ENCODE measurements at regions of chr15 and their contacts with region 1.

Region 1: DNA sequence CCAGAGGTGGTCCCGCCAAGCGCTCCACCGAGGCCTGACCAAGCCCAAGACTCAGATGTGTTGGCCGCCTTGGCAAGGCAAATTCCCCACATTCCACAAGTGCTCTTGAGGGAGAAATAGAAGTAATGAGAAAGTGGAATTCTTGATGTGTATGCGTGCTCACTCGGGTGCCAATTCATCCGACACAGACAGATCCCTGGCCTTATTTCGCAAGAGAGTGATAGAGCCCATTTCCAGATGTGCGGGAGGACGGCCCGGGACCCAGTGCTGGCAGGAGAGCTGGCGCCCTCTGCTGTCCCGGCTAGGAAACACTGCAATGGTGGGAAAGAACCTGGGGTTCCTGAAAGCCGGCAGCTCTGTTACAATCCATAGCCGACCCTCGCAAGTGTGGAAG is 76.0 kb downstream of the HMG20A start:
- DNase-seq: peak; percentile 95
- H3K4me3 ChIP-seq: peak overlapping the region; percentile 39
- H3K27ac ChIP-seq: peak overlapping the region; percentile 91
- H3K27me3 ChIP-seq: no peaks in the 10 kb centered on the region
- CTCF ChIP-seq: peak; percentile 98

Region 2: DNA sequence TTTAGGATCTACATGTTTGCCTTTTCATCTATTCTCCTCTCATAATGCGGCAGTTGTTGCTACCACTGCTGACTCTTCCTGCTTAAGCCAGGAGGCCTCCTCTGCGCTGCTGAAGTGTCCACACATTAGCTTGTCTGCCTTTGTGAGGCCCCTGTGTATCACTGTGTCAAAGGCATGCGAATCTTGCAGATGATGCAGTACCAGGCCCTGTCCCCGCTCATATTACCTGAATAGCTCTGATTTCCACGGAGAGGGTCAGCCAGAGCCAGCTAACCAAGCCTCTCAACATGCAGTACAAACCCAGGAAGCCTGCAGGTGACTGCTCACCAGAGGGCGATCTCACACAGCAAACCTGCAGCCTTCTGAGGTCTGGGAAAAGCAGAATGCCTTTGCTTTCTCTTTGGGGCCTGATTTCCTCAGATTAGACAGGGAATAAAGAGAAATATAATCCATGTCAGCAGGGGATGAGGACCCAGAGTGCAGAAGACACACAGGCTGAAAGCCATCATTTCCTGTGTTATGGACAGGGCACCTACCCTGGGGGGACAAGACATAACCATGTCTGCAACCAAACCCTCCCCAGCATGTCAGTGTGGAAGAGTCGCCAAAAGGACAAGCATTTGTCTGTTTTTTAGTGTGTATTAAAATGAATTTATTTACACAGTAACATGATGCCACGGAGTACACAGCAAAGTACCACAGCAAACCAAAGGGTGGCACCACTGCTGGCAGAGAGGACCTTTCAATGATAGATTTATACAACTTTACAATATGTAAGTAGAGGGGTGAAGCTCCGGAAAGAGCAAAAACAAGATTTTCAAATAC is 389.0 kb before region 1 on chr15:
- CTCF ChIA-PET with region 1: interaction called, 12 read pairs
- POLR2A ChIA-PET with region 1: no interaction called
- DNase-seq: peak; percentile 27
- H3K4me3 ChIP-seq: no peak overlapping the region
- H3K27ac ChIP-seq: no peak overlapping the region
- H3K27me3 ChIP-seq: no peaks in the 10 kb centered on the region
- CTCF ChIP-seq: peak; percentile 79

Region 3: GRCh38 chr15:77118882-77119321 is 377.8 kb before region 1 on chr15:
- CTCF ChIA-PET with region 1: interaction called, 33 read pairs
- POLR2A ChIA-PET with region 1: interaction called, 3 read pairs
- DNase-seq: peak; percentile 54
- H3K4me3 ChIP-seq: no peak overlapping the region
- H3K27ac ChIP-seq: no peak overlapping the region
- H3K27me3 ChIP-seq: no peaks in the 10 kb centered on the region
- CTCF ChIP-seq: peak; percentile 82

Region 4: DNA sequence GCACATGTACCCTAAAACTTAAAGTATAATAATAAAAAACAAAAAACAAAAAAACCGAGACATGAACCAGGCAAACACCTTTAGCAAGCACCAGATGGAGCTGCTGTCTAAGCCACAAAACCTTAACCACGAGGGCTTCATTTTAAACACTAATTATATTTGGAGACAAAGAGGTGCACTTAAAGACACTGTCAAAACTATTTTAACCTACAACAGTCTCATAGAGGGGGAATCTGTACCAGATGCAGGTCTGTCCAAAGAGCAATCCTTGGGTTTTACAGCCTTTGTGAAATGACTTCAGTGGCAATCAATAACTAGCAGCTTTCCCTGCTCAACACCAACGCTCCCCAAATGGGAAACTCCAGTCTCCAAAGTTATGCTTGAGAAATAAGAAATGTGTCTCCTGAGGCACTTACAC is 310.1 kb before region 1 on chr15:
- CTCF ChIA-PET with region 1: interaction called, 20 read pairs
- POLR2A ChIA-PET with region 1: no interaction called
- DNase-seq: peak; percentile 8
- H3K4me3 ChIP-seq: no peak overlapping the region
- H3K27ac ChIP-seq: no peak overlapping the region
- H3K27me3 ChIP-seq: no peaks in the 10 kb centered on the region
- CTCF ChIP-seq: peak; percentile 69

Region 5: DNA sequence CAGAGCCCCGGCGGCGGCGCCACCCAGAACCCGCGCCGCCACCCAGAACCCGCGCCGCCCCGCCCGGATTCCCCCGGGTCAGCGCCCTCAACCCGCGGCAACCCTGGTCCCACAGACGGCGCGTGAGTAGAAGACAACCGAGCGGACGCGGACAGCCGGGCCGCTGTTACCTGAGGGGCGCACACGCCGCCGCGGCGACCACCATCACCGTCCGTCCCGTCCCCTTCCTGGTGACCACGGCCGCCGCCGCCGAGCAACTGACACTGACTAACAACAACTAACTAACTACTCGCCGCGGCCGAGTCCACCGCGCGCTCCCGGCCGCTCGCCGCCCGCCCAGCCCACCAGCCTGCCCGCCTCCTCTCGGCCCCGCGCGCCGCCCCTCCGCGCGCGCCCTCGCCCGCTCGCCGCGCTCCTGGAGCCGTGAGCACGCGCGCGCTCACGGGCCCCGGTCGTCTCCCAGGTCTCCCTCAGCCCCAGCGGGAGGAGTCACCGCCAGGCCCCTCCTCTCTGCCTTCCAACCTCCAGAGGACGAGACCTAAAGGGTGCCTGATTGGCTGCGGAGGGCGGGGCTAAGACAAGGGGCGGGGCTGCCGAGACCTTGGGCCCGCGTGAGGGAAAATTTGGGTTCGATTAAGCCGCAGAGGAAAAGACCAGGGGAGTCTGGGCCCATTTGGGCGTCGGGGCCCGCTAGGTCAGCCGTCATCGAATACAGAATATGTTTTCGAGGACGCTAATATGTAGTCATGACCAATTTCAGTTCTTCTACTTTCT is 76.7 kb before region 1 on chr15 and contains the start of gene PEAK1:
- CTCF ChIA-PET with region 1: interaction called, 9 read pairs
- POLR2A ChIA-PET with region 1: interaction called, 10 read pairs
- DNase-seq: peak; percentile 97
- H3K4me3 ChIP-seq: peak within 1 kb of the TSS; percentile 82
- H3K27ac ChIP-seq: peak within 1 kb of the TSS; percentile 85
- H3K27me3 ChIP-seq: no peaks in the 10 kb centered on the region
- CTCF ChIP-seq: no peak
- polyA plus RNA-seq, gene PEAK1: 45.2 and 52.1 TPM in 2 replicates

Region 6: GRCh38 chr15:77482570-77482969 is 14.1 kb before region 1 on chr15:
- CTCF ChIA-PET with region 1: interaction called, 32 read pairs
- POLR2A ChIA-PET with region 1: interaction called, 4 read pairs
- DNase-seq: peak; percentile 50
- H3K4me3 ChIP-seq: no peak overlapping the region
- H3K27ac ChIP-seq: no peak overlapping the region
- H3K27me3 ChIP-seq: no peaks in the 10 kb centered on the region
- CTCF ChIP-seq: no peak

Region 7: DNA sequence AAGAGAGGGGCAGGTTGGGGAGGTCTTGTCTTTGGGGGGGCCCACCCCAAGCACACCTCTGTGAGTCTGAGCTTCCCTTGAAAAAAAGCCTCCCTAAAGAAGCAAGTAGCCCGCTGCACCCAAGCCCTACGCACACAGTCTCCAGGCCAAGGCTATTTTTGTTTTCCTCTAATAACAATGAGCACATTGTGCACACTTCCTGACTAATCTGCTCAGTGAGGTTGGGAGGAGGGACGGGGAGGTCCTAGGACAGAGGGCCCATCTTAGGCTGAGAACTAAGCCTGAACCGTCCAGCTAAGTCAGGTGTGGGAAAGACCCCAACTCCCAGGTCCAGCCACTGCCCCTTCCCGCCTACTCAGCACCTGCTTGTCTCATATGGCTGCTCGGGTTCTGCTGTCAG is 11.2 kb after region 1 on chr15:
- CTCF ChIA-PET with region 1: interaction called, 19 read pairs
- POLR2A ChIA-PET with region 1: no interaction called
- DNase-seq: no peak
- H3K4me3 ChIP-seq: no peak overlapping the region
- H3K27ac ChIP-seq: peak overlapping the region; percentile 23
- H3K27me3 ChIP-seq: no peaks in the 10 kb centered on the region
- CTCF ChIP-seq: no peak